Heart left ventricle (tissue), 16 donors: ENCODE measurements at regions of chr18 and their contacts with region 1.

Region 1: DNA sequence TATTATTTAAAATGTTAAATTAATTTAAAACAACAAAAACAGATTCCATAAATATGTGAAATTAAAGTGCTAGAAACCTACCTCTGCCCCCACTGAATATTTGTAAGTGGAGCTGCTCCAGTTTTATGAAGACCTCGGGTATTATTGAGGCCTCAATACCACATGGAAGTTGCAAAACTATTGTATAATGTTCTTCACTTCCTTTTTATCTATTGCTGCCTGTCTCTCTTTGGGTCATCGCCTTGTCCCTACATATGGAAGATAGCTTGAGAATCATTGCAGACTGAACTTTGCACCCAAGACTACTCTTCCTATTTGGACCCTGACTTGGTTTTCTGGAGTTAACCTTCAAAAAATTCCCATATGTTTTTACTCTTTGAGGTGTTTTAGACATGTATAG is 212.1 kb upstream of the NETO1 start:
- DNase-seq: no peak
- ATAC-seq: no peak
- H3K4me3 ChIP-seq: no peak overlapping the region
- H3K27ac ChIP-seq: no peak overlapping the region
- H3K4me1 ChIP-seq: no peaks in the 10 kb centered on the region
- H3K27me3 ChIP-seq: no peaks in the 10 kb centered on the region
- CTCF ChIP-seq: no peak
- POLR2A ChIP-seq: no peak

Region 2: GRCh38 chr18:73060666-73061270 is 19.2 kb before region 1 on chr18:
- intact Hi-C with region 1: loop called in 1 of 10 experiments (anchors 2 kb)
- DNase-seq: no peak
- ATAC-seq: no peak
- H3K4me3 ChIP-seq: no peak overlapping the region
- H3K27ac ChIP-seq: no peak overlapping the region
- H3K4me1 ChIP-seq: no peaks in the 10 kb centered on the region
- H3K27me3 ChIP-seq: no peaks in the 10 kb centered on the region
- CTCF ChIP-seq: no peak
- POLR2A ChIP-seq: no peak